ENCODE measurements at regions of chr19 and their contacts with region 1.

Region 1: DNA sequence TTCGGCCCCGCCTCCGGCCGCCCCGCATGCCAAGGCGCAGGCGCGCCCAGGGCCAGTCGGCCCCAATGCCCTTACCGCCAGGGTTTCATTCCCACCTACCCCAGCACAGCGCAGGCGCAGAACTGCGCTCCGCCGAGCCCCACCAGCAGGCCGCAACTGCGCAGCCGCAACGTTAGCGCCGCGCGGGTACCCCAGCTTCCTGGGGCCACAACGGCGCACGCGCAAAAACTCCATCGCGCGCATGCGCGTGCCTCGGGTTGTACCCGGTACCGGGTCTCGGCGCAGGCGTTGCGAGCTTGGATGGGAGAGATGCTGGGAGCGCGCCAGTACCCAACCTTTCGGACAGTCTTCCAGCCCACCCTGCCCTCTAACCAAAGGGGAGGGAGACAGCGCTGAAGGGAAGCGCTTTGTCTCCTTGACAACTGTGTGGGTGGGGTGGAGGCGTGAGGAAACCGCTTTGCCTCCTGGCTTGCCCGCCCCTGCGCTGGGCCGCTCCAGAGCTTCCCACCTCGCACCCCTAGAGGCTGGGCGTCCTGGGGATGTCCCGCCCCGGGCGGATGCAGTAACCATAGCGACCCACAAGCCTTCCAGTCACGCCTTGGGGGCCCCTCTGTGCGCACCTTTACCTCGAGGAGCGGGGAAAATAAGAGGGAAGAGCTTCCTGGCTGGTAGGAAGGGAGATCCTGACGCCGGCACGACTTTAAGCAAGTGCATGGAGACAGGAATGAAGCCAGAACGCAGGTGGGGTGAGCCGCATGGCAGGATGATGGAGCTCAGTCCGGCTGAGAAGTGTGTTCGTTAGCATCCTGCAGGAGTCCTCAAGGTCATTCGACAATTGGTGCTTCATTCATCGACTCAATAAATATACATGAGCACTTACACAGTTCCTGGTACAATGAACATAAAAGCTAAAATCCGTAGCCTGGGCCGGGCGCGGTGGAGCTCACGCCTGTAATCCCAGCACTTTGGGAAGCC is 525 bp upstream of the MYPOP start:
- DNase-seq: peak; percentile 100
- H3K4me3 Mint-ChIP-seq: peak overlapping the region; percentile 93
- H3K27ac Mint-ChIP-seq: peak overlapping the region; percentile 69
- H3K4me1 Mint-ChIP-seq: peaks cover 8% of the 10 kb centered on the region
- H3K27me3 Mint-ChIP-seq: no peaks in the 10 kb centered on the region

Region 2: GRCh38 chr19:45886427-45887199 is 16.3 kb before region 1 on chr19:
- intact Hi-C with region 1: loop called (anchors 1 kb)
- DNase-seq: peak; percentile 85
- H3K4me3 Mint-ChIP-seq: peak overlapping the region; percentile 88
- H3K27ac Mint-ChIP-seq: peak overlapping the region; percentile 88
- H3K4me1 Mint-ChIP-seq: peaks cover 13% of the 10 kb centered on the region
- H3K27me3 Mint-ChIP-seq: no peaks in the 10 kb centered on the region

Region 3: DNA sequence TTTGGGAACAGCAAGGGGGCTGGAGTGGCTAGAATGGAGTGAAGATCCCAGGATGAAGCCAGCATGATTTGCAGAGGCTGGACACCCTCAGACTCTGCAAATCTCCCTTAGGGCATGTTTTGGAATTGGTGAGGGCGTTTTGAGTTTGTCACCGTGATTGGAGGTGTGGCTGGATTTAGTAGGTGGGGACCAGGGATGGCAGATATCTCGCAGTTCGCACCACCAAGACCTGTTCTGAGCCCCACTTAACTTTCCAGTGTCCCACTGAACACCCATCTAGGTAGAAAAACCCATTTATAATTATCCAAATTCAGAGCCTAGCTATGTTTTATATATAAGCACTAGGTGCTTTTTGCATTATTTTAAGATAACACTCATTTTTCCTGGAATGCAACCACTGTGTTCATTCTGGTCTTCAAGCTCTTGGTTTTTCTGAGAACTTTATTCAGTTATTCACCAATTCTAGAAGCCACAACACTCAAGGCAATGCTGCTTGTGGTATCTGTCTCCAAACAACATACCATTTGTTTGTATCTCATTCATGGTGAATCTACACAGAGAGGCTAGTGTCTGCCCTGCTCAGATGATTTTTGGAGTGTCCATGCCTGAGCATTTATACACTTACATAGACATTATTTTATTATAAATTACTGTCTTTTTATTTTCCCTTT is 14.6 kb after region 1 on chr19:
- intact Hi-C with region 1: loop called (anchors 2 kb)
- DNase-seq: no peak
- H3K4me3 Mint-ChIP-seq: no peak overlapping the region
- H3K27ac Mint-ChIP-seq: no peak overlapping the region
- H3K4me1 Mint-ChIP-seq: peaks cover 31% of the 10 kb centered on the region
- H3K27me3 Mint-ChIP-seq: peaks cover 5% of the 10 kb centered on the region

Region 4: GRCh38 chr19:45994989-45995714 is 92.2 kb after region 1 on chr19 and contains the start of gene CCDC61:
- intact Hi-C with region 1: loop called (anchors 5 kb)
- DNase-seq: peak; percentile 96
- H3K4me3 Mint-ChIP-seq: no peak within 1 kb of the TSS
- H3K27ac Mint-ChIP-seq: peak within 1 kb of the TSS; percentile 29
- H3K4me1 Mint-ChIP-seq: peaks cover 12% of the 10 kb centered on the region
- H3K27me3 Mint-ChIP-seq: peaks cover 5% of the 10 kb centered on the region
- total RNA-seq, gene CCDC61: 25.3 and 31.2 TPM in 2 replicates

Measured in activated T-helper 2 cell treated with anti-CD3 and anti-CD28 coated beads, Interferon-gamma antibody, Interleukin-2, Interleukin-4, amounts not matched to agents 10 μg/mL and 5 μg/mL and 100 μg/mL, durations not matched to agents 14 hours and 24 hours and 36 hours (primary cell).